Testis (tissue), 5 donors: ENCODE measurements at regions of chr11 and their contacts with region 1.

Region 1: GRCh38 chr11:1896923-1897322 is 5.2 kb upstream of the PRR33 start:
- DNase-seq: no peak
- H3K4me3 ChIP-seq: no peak overlapping the region
- H3K27ac ChIP-seq: peak overlapping the region in 1 of 2 donors; percentile 24
- H3K4me1 ChIP-seq: no peaks in the 10 kb centered on the region
- H3K27me3 ChIP-seq: no peaks in the 10 kb centered on the region
- CTCF ChIP-seq: no peak
- POLR2A ChIP-seq: no peak

Region 2: DNA sequence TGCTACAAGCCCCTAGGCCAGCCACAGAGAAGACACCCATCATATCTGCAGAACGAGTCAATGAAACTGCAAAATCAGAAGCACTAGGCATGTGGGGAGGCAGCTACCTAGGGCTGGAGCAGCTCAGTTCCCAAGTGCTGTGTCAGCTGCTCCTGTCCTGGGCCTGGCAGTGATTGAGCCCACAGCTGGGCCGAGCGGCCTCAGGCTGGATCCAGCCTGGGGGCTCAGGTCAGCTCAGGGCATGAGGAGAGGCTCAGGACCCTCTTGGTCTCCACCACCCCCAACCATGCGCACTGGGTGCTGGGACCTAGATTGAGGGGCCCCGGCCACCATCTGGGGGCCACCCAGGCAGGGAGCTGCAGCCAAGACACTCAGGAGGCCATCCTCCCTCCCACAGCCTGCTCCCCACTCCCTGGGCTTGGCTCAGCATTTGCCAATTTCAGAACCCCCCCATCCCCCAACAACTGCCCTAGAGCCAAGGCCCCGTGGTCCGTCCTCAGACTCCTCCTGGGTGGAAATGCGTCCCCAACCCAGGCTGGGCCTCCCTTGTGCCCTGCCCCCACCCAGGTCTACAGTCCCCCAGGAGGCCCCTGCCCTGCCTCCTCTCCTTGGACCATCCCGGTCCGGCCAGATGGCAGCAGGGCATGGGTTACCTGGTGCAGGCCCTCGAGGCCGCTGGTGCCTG is 20.2 kb after region 1 on chr11:
- intact Hi-C with region 1: loop called (anchors 1 kb)
- DNase-seq: no peak
- H3K4me3 ChIP-seq: no peak overlapping the region
- H3K27ac ChIP-seq: no peak overlapping the region
- H3K4me1 ChIP-seq: peaks cover 18% of the 10 kb centered on the region
- H3K27me3 ChIP-seq: no peaks in the 10 kb centered on the region
- CTCF ChIP-seq: no peak
- POLR2A ChIP-seq: no peak

Region 3: DNA sequence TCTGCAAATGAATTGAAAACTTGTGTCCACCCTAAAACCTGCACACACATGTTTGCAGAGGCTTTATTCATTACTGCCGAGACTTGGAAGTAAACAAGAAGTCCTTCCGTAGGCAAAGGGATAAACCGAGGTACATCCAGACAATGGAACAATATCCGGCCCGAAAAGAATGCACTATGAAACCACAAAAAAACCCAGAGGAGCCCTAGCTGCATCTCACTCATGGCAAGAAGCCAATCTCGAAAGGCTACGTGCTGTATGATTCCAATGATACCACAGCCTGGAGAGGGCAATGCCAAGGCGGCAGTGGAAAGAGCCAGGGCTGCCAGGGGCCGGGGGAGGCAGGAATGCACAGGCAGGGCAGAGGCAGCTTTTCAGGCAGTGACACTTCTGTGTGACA is 47.1 kb after region 1 on chr11:
- intact Hi-C with region 1: loop called (anchors 5 kb)
- DNase-seq: no peak
- H3K4me3 ChIP-seq: no peak overlapping the region
- H3K27ac ChIP-seq: no peak overlapping the region
- H3K4me1 ChIP-seq: peaks cover 2% of the 10 kb centered on the region
- H3K27me3 ChIP-seq: no peaks in the 10 kb centered on the region
- CTCF ChIP-seq: no peak
- POLR2A ChIP-seq: no peak